Mammary epithelial cell (primary cell): ENCODE measurements at regions of chr1 and their contacts with region 1.

Region 1: GRCh38 chr1:204885288-204885711 is 14.6 kb downstream of the NFASC start:
- DNase-seq: peak; percentile 72
- H3K4me3 ChIP-seq: peak overlapping the region; percentile 14 to 34 (median 28)
- H3K27ac ChIP-seq: peak overlapping the region; percentile 50
- H3K4me1 ChIP-seq: peaks cover 14% of the 10 kb centered on the region
- H3K27me3 ChIP-seq: no peaks in the 10 kb centered on the region
- CTCF ChIP-seq: no peak

Region 2: GRCh38 chr1:204837440-204838084 is 47.7 kb before region 1 on chr1:
- CTCF ChIA-PET with region 1: no interaction called
- dilution Hi-C with region 1: loop called (anchors 10 kb)
- in situ Hi-C with region 1: no loop called
- intact Hi-C with region 1: no loop called
- DNase-seq: peak; percentile 38
- H3K4me3 ChIP-seq: no peak overlapping the region
- H3K27ac ChIP-seq: no peak overlapping the region
- H3K4me1 ChIP-seq: no peaks in the 10 kb centered on the region
- H3K27me3 ChIP-seq: no peaks in the 10 kb centered on the region
- CTCF ChIP-seq: peak in 1 of 2 donors; percentile 6

Region 3: DNA sequence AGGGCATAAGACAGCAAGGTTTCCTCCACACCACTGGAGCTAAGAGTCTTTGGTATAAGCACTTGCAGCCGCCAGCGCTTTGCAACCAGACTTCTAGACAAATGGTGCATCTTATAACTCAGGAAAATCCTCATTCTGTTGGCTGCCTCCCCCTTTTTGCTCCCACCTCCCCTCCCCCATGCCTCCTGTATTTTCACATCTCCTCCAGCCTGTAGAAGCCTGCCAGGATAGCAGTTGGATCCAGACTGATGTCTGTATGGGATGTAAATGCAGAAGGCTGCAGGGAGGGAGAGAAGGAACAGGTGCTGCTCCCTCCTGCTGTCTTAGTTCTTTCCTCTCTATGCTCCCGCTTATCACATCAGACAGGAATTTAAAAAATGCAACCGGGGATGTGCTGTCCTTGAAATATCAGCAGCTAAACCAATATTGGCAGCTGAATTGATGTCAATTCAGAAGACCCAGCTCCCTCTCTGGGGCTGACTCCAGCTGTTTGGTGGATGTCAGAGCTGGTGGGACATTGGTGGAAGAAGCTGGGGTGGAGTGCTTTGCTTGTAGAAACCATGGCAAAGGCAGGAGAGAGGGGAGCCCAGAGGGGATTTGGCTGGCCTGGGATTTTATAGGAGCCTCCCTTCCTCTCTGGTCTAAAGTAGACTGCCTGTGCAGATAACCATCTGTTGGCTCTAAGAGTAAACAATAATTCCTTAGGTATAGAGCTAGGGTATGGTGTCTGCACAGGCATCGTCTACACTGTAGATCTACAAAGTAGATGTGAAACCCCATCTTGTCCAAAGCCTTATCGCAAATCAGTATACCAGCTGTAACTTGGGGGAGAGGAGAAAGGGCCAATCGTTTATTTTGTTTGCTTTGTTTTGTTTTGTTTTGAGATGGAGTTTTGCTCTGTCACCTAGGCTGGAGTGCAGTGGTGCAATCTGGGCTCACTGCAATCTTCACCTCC is 39.0 kb after region 1 on chr1:
- CTCF ChIA-PET with region 1: no interaction called
- dilution Hi-C with region 1: no loop called
- in situ Hi-C with region 1: no loop called
- intact Hi-C with region 1: loop called (anchors 5 kb)
- DNase-seq: no peak
- H3K4me3 ChIP-seq: no peak overlapping the region
- H3K27ac ChIP-seq: no peak overlapping the region
- H3K4me1 ChIP-seq: peaks cover 5% of the 10 kb centered on the region
- H3K27me3 ChIP-seq: no peaks in the 10 kb centered on the region
- CTCF ChIP-seq: no peak